Endothelial cell of umbilical vein (primary cell): ENCODE measurements at regions of chr3 and their contacts with region 1.

Region 1: GRCh38 chr3:36937492-36937891 is 7.4 kb downstream of the TRANK1 start:
- DNase-seq: no peak
- H3K4me3 ChIP-seq: no peak overlapping the region
- H3K27ac ChIP-seq: no peak overlapping the region
- H3K4me1 ChIP-seq: peaks cover 3% of the 10 kb centered on the region
- H3K27me3 ChIP-seq: no peaks in the 10 kb centered on the region
- CTCF ChIP-seq: no peak
- POLR2A ChIP-seq: no peak

Region 2: DNA sequence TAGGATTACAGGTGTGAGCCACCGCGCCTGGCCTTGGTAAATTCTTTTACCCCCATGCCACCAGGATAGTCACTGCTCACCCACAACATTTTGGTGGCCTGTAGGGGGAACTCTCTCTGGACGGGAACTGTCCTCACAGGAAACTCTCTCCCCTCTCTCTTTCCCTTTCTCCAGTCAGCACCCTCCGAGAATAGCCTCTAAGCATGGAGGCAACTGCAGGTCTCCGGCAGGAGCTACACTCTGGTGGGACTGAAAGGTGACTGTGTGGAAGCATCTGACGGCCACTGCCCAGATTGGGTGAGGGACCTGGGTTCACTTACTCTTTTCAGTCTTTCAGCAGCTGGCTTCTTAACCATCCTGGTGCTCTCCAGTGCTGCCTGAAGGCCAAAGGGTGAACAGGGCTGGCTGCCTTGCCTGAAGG is 14.0 kb before region 1 on chr3:
- CTCF ChIA-PET with region 1: interaction called, 11 read pairs
- POLR2A ChIA-PET with region 1: no interaction called
- dilution Hi-C with region 1: no loop called
- intact Hi-C with region 1: no loop called
- DNase-seq: no peak
- H3K4me3 ChIP-seq: no peak overlapping the region
- H3K27ac ChIP-seq: no peak overlapping the region
- H3K4me1 ChIP-seq: no peaks in the 10 kb centered on the region
- H3K27me3 ChIP-seq: no peaks in the 10 kb centered on the region
- CTCF ChIP-seq: peak in 1 of 2 donors; percentile 3
- POLR2A ChIP-seq: no peak

Region 3: GRCh38 chr3:37197810-37198371 is 260.4 kb after region 1 on chr3:
- CTCF ChIA-PET with region 1: no interaction called
- POLR2A ChIA-PET with region 1: no interaction called
- dilution Hi-C with region 1: no loop called
- intact Hi-C with region 1: no loop called
- DNase-seq: no peak
- H3K4me3 ChIP-seq: no peak overlapping the region
- H3K27ac ChIP-seq: no peak overlapping the region
- H3K4me1 ChIP-seq: no peaks in the 10 kb centered on the region
- H3K27me3 ChIP-seq: no peaks in the 10 kb centered on the region
- CTCF ChIP-seq: no peak
- POLR2A ChIP-seq: no peak